ENCODE measurements at regions of chr5 and their contacts with region 1.

Region 1: GRCh38 chr5:133051580-133052332 is at the start of gene HSPA4:
- DNase-seq: peak; percentile 93 to 100 (median 95)
- ATAC-seq: peak; percentile 88
- H3K4me3 ChIP-seq: peak within 1 kb of the TSS; percentile 98
- H3K4me3 Mint-ChIP-seq: peak within 1 kb of the TSS; percentile 100
- H3K27ac ChIP-seq: peak within 1 kb of the TSS; percentile 95 to 99
- H3K27ac Mint-ChIP-seq: peak within 1 kb of the TSS; percentile 100
- H3K4me1 ChIP-seq: peaks cover 40% of the 10 kb centered on the region
- H3K4me1 Mint-ChIP-seq: peaks cover 64% of the 10 kb centered on the region
- H3K27me3 ChIP-seq: no peaks in the 10 kb centered on the region
- H3K27me3 Mint-ChIP-seq: no peaks in the 10 kb centered on the region
- CTCF ChIP-seq: no peak
- total RNA-seq, gene HSPA4: 42.2 to 44.7 TPM

Region 2: DNA sequence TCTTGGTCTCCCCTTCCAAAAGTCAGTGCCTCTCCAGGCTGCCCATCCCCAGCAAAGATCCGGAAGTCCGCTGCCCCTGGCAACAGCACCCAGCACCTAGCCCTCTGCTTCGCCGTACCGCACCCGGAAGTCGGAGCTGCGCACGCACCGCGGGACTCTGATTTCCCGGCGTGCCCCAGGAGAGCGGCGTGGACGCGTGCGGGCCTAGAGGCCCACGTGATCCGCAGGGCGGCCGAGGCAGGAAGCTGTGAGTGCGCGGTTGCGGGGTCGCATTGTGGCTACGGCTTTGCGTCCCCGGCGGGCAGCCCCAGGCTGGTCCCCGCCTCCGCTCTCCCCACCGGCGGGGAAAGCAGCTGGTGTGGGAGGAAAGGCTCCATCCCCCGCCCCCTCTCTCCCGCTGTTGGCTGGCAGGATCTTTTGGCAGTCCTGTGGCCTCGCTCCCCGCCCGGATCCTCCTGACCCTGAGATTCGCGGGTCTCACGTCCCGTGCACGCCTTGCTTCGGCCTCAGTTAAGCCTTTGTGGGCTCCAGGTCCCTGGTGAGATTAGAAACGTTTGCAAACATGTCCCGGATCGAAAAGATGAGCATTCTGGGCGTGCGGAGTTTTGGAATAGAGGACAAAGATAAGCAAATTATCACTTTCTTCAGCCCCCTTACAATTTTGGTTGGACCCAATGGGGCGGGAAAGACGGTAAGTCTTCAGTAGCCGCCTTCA is 494.8 kb before region 1 on chr5 and contains the start of gene RAD50:
- CTCF ChIA-PET with region 1: no interaction called
- POLR2A ChIA-PET with region 1: interaction called, 5 read pairs
- intact Hi-C with region 1: loop called in 1 of 2 experiments (anchors 10 kb)
- DNase-seq: peak; percentile 79 to 96 (median 88)
- ATAC-seq: peak; percentile 94
- H3K4me3 ChIP-seq: peak within 1 kb of the TSS; percentile 83
- H3K4me3 Mint-ChIP-seq: peak within 1 kb of the TSS; percentile 95
- H3K27ac ChIP-seq: peak within 1 kb of the TSS; percentile 76 to 78
- H3K27ac Mint-ChIP-seq: peak within 1 kb of the TSS; percentile 98
- H3K4me1 ChIP-seq: peaks cover 22% of the 10 kb centered on the region
- H3K4me1 Mint-ChIP-seq: peaks cover 43% of the 10 kb centered on the region
- H3K27me3 ChIP-seq: no peaks in the 10 kb centered on the region
- H3K27me3 Mint-ChIP-seq: no peaks in the 10 kb centered on the region
- CTCF ChIP-seq: no peak
- total RNA-seq, gene RAD50: 12.7 to 13.4 TPM

Region 3: GRCh38 chr5:132866342-132867045 is 185.3 kb before region 1 on chr5 and contains the starts of genes GDF9 and UQCRQ:
- CTCF ChIA-PET with region 1: no interaction called
- POLR2A ChIA-PET with region 1: interaction called, 4 read pairs
- intact Hi-C with region 1: loop called in 1 of 2 experiments (anchors 2 kb)
- DNase-seq: peak; percentile 75 to 99 (median 84)
- ATAC-seq: peak; percentile 93
- H3K4me3 ChIP-seq: peak within 1 kb of the TSS; percentile 95
- H3K4me3 Mint-ChIP-seq: peak within 1 kb of the TSS; percentile 96
- H3K27ac ChIP-seq: peak within 1 kb of the TSS; percentile 95 to 98
- H3K27ac Mint-ChIP-seq: peak within 1 kb of the TSS; percentile 97
- H3K4me1 ChIP-seq: peaks cover 24% of the 10 kb centered on the region
- H3K4me1 Mint-ChIP-seq: peaks cover 31% of the 10 kb centered on the region
- H3K27me3 ChIP-seq: no peaks in the 10 kb centered on the region
- H3K27me3 Mint-ChIP-seq: no peaks in the 10 kb centered on the region
- CTCF ChIP-seq: no peak
- total RNA-seq, gene GDF9: 0.91 to 1.6 TPM
- total RNA-seq, gene UQCRQ: 119 to 132 TPM

Region 4: DNA sequence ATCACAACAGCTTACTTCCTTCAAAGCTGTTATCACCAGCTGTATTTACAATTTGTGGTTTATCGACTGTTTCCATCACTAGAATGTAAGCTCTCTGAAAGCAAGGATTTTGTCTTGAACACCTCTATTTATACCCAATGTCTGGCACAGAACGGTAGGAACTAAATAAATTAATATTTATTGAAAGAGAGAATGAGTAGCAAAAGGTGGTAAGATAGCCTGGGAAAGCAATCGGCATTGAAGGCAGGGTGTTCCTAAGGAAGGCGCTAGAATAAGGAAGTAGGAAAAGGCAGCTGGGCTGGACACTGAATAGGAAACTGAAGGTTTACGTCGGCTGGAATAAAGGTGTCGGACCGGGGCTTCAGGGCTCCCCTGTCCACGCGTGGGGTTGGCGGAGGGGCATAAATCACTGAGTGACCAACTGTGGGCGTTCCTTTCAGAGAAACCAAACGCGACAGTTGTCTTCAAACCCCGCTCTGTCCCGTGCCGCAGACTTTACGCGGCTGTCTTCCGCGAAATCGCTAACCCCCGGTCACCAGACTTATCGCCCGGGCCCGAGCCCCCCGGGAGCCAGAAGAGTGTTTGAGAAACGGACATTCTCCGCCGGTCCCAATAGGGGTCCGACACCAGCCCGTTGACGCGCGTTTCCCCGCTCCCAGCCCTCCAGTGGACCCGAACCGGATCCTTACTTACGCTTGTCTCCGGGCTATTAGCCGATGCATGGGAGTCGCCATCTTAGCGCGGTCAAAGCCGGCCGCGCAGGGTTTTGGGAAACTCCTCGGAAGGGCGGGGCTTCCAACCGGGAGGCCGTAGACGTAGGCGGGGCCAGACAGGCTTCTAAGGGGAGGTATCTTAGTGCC is 25.7 kb before region 1 on chr5 and contains the start of gene ZCCHC10:
- CTCF ChIA-PET with region 1: interaction called, 6 read pairs
- POLR2A ChIA-PET with region 1: interaction called, 33 read pairs
- intact Hi-C with region 1: loop called (anchors 1 kb)
- DNase-seq: peak; percentile 81 to 95 (median 88)
- ATAC-seq: peak; percentile 99
- H3K4me3 ChIP-seq: peak within 1 kb of the TSS; percentile 90
- H3K4me3 Mint-ChIP-seq: peak within 1 kb of the TSS; percentile 97
- H3K27ac ChIP-seq: peak within 1 kb of the TSS; percentile 83 to 88
- H3K27ac Mint-ChIP-seq: peak within 1 kb of the TSS; percentile 92
- H3K4me1 ChIP-seq: peaks cover 14% of the 10 kb centered on the region
- H3K4me1 Mint-ChIP-seq: peaks cover 21% of the 10 kb centered on the region
- H3K27me3 ChIP-seq: no peaks in the 10 kb centered on the region
- H3K27me3 Mint-ChIP-seq: no peaks in the 10 kb centered on the region
- CTCF ChIP-seq: no peak
- total RNA-seq, gene ZCCHC10: 17.7 to 20.1 TPM

Region 5: GRCh38 chr5:133968049-133968980 is 916.6 kb after region 1 on chr5 and contains the start of gene C5orf15:
- CTCF ChIA-PET with region 1: no interaction called
- POLR2A ChIA-PET with region 1: no interaction called
- intact Hi-C with region 1: loop called in 1 of 2 experiments (anchors 5 kb)
- DNase-seq: peak; percentile 74 to 98 (median 89)
- ATAC-seq: peak; percentile 91
- H3K4me3 ChIP-seq: peak within 1 kb of the TSS; percentile 95
- H3K4me3 Mint-ChIP-seq: peak within 1 kb of the TSS; percentile 94
- H3K27ac ChIP-seq: peak within 1 kb of the TSS; percentile 82 to 86
- H3K27ac Mint-ChIP-seq: peak within 1 kb of the TSS; percentile 98
- H3K4me1 ChIP-seq: peaks cover 20% of the 10 kb centered on the region
- H3K4me1 Mint-ChIP-seq: peaks cover 57% of the 10 kb centered on the region
- H3K27me3 ChIP-seq: no peaks in the 10 kb centered on the region
- H3K27me3 Mint-ChIP-seq: no peaks in the 10 kb centered on the region
- CTCF ChIP-seq: no peak
- total RNA-seq, gene C5orf15: 12.3 to 15.5 TPM

Measured in CD4-positive, alpha-beta T cell (primary cell).